Common myeloid progenitor, CD34-positive (primary cell): ENCODE measurements at regions of chr11 and their contacts with region 1.

Region 1: DNA sequence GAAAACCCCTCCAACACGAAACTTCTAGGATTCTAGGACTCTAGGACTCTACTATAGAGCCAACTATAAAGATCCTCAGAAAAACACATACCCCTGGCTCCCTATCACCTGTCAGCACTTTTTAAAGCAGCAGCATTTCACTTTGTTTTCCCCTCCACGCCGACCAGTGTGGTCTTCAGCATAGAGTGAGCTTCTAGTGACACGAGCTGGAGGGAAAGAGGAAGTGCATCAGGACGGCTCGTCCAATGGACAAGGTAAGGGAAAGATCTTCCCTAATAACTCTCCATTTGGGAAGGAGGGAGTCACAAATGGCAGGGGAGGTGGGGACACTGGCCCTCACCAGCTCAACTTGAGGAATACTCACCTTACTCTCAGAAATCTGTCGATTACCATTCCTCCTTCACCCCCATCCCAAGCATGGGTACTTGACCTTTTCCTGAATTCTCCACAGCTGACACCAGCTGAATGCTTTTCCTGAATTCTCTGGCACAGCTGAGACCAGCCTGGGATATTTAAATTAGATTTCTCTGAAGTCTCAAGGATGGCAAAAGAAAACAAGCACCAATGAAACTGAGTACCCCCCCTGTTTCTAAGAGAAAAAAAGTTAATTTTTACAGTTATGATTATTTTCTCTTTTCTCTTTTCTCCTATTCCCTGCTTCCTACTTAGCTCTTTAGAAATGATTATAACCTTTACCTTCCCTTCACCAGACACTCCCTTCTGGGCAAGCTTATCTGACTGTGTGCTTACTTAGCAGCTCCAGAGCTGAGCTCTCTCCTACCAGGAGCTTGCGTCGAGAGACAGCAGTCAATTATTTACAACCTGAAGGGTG is 33.3 kb upstream of the NNMT start:
- DNase-seq: peak; percentile 53 to 80 (median 78)
- H3K4me3 ChIP-seq: no peak overlapping the region
- H3K27ac ChIP-seq: no peak overlapping the region
- H3K4me1 ChIP-seq: peaks cover 0 to 23% (median 22%) of the 10 kb centered on the region in 4 experiments
- H3K27me3 ChIP-seq: peaks cover 0 to 11% (median 11%) of the 10 kb centered on the region in 5 experiments

Region 2: DNA sequence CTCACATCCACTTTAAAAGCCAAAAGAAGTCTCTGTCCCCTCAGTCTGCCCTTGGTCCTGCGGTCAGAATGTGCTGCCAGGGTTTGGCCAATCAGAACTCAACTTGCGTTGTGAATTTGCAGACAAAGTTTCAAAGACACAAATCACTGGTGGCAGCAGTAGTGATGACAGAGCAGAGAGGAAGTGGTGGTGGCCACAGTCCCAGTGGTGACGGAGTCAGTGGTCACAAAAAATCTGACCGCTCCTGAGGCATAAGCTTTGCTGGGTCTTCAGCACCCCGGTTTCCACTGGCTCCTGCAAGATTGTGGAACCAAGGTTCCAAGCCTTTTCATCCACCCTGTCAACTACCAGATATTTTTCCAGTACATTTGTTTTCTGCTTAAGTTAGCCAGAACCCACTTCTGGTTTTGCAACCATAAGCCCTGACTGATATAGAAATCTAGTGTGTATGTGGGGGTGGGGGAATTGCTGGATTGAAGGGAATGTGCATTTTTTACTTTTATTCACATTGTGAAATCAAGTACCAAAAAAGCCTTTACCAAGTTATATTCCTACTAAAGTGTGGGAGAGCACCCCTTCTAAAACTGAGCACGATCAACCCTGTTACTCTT is 669.1 kb before region 1 on chr11:
- CTCF ChIA-PET with region 1: no interaction called
- POLR2A ChIA-PET with region 1: no interaction called
- DNase-seq: peak in 2 of 3 donors; percentile 31 to 60
- H3K4me3 ChIP-seq: no peak overlapping the region
- H3K27ac ChIP-seq: no peak overlapping the region
- H3K4me1 ChIP-seq: peaks cover 0 to 7% (median 3%) of the 10 kb centered on the region in 4 experiments
- H3K27me3 ChIP-seq: peaks cover 2 to 8% (median 2%) of the 10 kb centered on the region in 5 experiments

Region 3: GRCh38 chr11:113896156-113896879 is 366.6 kb before region 1 on chr11:
- CTCF ChIA-PET with region 1: interaction called, 168 read pairs
- POLR2A ChIA-PET with region 1: interaction called, 3 read pairs
- DNase-seq: peak; percentile 28 to 68 (median 58)
- H3K4me3 ChIP-seq: no peak overlapping the region
- H3K27ac ChIP-seq: no peak overlapping the region
- H3K4me1 ChIP-seq: peaks cover 0 to 7% (median 0%) of the 10 kb centered on the region in 4 experiments
- H3K27me3 ChIP-seq: peaks cover 0 to 2% (median 0%) of the 10 kb centered on the region in 5 experiments

Region 4: GRCh38 chr11:113994077-113994954 is 268.6 kb before region 1 on chr11:
- CTCF ChIA-PET with region 1: interaction called, 327 read pairs
- POLR2A ChIA-PET with region 1: no interaction called
- DNase-seq: peak; percentile 10 to 40 (median 23)
- H3K4me3 ChIP-seq: no peak overlapping the region
- H3K27ac ChIP-seq: no peak overlapping the region
- H3K4me1 ChIP-seq: no peaks in the 10 kb centered on the region
- H3K27me3 ChIP-seq: peaks cover 0 to 29% (median 6%) of the 10 kb centered on the region in 5 experiments

Region 5: DNA sequence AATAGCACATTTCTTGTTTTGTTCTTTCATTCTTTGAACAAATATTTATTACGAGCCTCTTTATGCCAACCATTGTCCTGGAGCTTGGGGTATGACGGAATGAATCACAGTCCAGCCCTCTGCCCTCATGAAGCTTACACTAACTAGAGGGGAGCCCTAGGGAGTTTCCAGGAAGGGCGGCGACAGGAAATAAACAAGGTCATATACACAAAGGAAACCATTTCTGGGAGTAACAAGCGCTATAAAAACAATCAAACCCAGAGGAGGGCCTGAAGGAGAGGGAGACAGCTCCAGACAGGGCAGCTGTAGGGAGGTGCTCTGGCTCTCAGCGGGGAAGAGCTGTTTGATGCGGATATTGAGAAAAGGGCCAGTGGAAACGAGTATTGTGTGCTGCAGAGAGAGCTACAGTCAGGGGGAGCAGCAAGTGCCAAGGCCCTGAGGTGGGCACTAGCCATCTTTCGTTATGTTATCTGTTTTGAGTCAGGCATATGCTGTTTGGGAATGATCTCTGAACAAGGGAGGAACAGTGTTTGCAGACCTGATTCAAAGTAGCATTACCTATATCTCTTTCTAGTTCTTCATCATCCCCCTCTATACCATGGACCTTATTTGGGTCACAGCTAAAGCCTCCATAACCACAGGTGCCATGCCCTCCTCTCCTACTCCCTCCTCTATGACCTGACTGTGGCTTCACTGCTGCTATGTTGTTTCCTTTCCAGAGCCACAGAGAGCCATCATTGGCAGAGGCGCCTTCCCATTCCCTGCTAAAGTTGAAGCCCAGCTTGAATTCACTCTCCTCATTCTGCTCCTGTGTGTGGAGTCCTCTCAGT is 218.6 kb before region 1 on chr11:
- CTCF ChIA-PET with region 1: interaction called, 155 read pairs
- POLR2A ChIA-PET with region 1: interaction called, 3 read pairs
- DNase-seq: no peak
- H3K4me3 ChIP-seq: no peak overlapping the region
- H3K27ac ChIP-seq: no peak overlapping the region
- H3K4me1 ChIP-seq: peaks cover 0 to 2% (median 0%) of the 10 kb centered on the region in 4 experiments
- H3K27me3 ChIP-seq: no peaks in the 10 kb centered on the region

Region 6: GRCh38 chr11:114174712-114175495 is 88.0 kb before region 1 on chr11:
- CTCF ChIA-PET with region 1: interaction called, 91 read pairs
- POLR2A ChIA-PET with region 1: no interaction called
- DNase-seq: no peak
- H3K4me3 ChIP-seq: no peak overlapping the region
- H3K27ac ChIP-seq: no peak overlapping the region
- H3K4me1 ChIP-seq: peaks cover 11 to 46% (median 32%) of the 10 kb centered on the region in 4 experiments
- H3K27me3 ChIP-seq: no peaks in the 10 kb centered on the region

Region 7: GRCh38 chr11:114219559-114220349 is 43.1 kb before region 1 on chr11:
- CTCF ChIA-PET with region 1: interaction called, 14 read pairs
- POLR2A ChIA-PET with region 1: interaction called, 4 read pairs
- DNase-seq: no peak
- H3K4me3 ChIP-seq: no peak overlapping the region
- H3K27ac ChIP-seq: no peak overlapping the region
- H3K4me1 ChIP-seq: peaks cover 3 to 54% (median 48%) of the 10 kb centered on the region in 4 experiments
- H3K27me3 ChIP-seq: no peaks in the 10 kb centered on the region

Region 8: DNA sequence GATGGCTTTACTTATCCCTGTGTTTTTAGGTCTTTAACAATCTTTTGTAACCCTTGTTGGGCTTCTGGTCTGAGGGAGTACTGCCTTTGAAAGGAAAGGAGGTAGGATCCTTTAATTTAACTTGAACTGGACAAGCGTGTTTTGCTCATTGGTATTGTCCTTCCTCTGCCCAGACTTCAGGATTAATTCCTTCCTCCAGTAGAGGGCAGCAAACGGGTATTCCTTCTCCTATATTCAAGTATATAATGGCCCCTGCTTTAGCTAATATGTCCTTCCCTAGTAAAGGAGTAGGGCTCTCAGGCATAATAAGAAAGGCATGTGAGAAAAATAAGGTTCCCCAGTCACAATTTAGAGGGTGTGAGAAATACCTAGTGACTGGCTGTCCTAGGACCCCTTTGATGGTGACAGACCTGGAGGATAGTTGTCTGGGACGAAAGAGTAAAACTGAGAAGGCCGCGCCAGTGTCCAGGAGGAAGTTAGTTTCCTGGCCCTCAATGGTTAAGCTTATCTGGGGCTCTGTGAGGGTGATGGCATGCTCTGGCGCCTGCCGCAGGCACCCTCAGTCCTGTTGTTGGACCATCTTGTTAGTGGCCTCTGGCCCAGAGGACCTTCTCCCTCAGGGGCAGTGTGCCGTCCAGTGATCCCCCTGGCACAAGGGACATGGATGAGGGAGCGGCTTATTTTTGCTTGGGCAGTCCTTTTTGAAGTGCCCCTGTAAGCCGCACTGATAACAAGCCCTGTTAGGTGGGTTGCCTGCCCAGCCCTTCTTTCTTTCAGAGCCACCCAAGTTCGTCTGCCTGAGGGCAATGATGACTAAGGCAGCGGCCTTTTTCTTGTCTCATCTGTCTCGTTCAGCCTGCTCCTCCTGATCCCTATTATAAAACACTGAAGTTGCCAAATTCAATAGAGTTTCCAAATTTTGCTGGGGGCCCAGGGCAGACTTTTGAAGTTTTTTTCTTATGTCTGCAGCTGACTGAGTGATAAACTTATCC is 85.6 kb after region 1 on chr11:
- CTCF ChIA-PET with region 1: no interaction called
- POLR2A ChIA-PET with region 1: no interaction called
- DNase-seq: peak; percentile 65 to 77 (median 69)
- H3K4me3 ChIP-seq: no peak overlapping the region
- H3K27ac ChIP-seq: no peak overlapping the region
- H3K4me1 ChIP-seq: no peaks in the 10 kb centered on the region
- H3K27me3 ChIP-seq: peaks cover 0 to 1% (median 0%) of the 10 kb centered on the region in 5 experiments